Activated CD4-positive, alpha-beta T cell treated with anti-CD3 and anti-CD28 coated beads, Interleukin-2, amount 10 ng/mL, durations not matched to agents 24 days and 14 days (primary cell): ENCODE measurements at regions of chr1 and their contacts with region 1.

Region 1: DNA sequence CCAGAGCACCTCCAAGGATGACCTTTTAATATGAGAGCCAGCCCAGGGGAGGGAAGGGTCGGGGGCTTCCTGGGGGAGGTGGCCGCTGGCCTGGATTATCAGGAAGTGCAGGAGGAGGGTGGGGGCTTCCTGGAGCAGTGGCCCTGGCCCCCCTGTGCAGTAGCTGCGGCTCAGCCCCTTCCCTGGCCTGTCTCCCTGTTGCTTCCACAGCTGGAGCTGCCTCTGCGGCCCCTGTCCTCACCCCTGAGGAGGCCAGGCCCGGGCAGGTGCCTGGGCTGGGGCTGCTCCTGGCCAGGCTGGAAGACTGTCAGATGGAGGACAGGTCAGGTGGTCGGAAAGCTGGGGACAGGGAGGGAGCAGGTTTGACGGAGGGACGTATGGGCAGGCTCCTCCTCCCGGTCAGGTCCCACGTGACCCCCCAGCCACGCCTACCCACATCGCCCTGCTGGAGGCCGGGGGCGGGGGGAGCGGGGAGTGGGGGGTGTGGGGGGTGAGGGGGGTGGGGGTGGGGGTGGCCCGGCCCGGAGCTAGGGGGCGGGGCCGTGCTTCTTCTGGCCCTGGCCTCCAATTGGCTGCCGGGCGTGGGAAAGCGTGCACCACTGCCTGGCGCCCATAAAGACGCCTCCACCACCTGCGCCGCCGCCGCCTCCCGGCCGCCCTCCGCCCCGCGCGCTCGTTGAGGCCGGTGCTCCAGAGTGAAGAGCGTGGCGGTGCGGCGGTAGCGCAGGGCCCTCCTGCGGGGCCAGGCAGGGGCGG is 10.2 kb upstream of the TNFRSF14 start:
- DNase-seq: peak; percentile 97
- H3K4me3 Mint-ChIP-seq: peak overlapping the region; percentile 93
- H3K27ac Mint-ChIP-seq: peak overlapping the region; percentile 95
- H3K4me1 Mint-ChIP-seq: peaks cover 11% of the 10 kb centered on the region
- H3K27me3 Mint-ChIP-seq: peaks cover 8% of the 10 kb centered on the region

Region 2: GRCh38 chr1:2233997-2234761 is 311.8 kb before region 1 on chr1:
- intact Hi-C with region 1: no loop called
- DNase-seq: peak; percentile 91
- H3K4me3 Mint-ChIP-seq: peak overlapping the region; percentile 93
- H3K27ac Mint-ChIP-seq: peak overlapping the region; percentile 88
- H3K4me1 Mint-ChIP-seq: peaks cover 62% of the 10 kb centered on the region
- H3K27me3 Mint-ChIP-seq: no peaks in the 10 kb centered on the region

Region 3: DNA sequence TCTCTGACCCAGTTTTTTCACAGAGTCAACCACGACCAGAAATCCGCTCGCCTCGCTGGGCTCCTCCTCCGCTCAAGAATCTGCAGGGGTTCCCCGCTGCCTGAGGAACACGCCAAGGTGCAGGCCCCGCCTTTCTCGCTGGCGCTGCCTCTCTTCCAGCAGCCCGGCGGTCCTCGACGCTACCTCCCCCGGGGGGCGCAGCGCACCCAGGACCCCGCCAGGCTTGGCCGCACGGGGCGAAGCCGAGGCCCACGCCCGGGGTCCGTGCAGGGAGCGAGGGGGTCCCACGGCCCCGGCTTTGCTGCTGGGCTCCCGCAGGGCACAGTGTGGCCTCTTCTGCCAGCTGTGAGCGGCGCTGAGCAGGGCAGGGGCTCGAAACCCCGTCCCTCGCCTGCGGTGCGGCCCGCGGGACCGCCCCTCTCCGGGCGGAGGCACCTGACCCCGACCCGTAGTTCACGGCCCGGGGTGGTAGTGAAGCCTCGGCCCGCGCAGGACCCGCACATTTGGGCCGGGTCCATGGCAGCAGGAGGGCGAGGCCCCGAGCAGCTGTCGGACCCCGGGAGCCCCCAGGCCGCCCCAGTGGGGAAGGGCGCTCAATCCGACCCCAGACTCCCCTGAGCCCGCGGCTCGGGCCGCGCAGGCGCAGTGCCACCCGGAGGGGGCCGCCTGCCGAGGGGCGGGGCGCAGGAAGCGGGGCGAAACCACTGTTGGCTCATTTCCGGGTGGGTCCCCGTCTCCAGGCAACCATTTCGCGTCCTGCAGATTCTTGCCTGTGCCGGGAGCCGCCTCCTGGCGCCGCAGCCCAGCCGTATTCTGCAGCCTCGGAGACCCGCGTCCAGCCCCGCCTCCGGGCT is 96.8 kb after region 1 on chr1:
- intact Hi-C with region 1: loop called (anchors 5 kb)
- DNase-seq: peak; percentile 98
- H3K4me3 Mint-ChIP-seq: peak overlapping the region; percentile 92
- H3K27ac Mint-ChIP-seq: peak overlapping the region; percentile 91
- H3K4me1 Mint-ChIP-seq: peaks cover 3% of the 10 kb centered on the region
- H3K27me3 Mint-ChIP-seq: no peaks in the 10 kb centered on the region